ENCODE measurements at regions of chr18 and their contacts with region 1.

Region 1: GRCh38 chr18:62584241-62585120 is 61.7 kb downstream of the ZCCHC2 start:
- DNase-seq: peak; percentile 88
- ATAC-seq: peak; percentile 94
- H3K4me3 ChIP-seq: no peak overlapping the region
- H3K4me3 Mint-ChIP-seq: peak overlapping the region; percentile 35
- H3K27ac ChIP-seq: no peak overlapping the region
- H3K27ac Mint-ChIP-seq: peak overlapping the region; percentile 11
- H3K4me1 ChIP-seq: peaks cover 13 to 20% of the 10 kb centered on the region in 2 donors
- H3K4me1 Mint-ChIP-seq: peaks cover 16% of the 10 kb centered on the region
- H3K27me3 ChIP-seq: no peaks in the 10 kb centered on the region
- H3K27me3 Mint-ChIP-seq: no peaks in the 10 kb centered on the region
- CTCF ChIP-seq: peak; percentile 94

Region 2: GRCh38 chr18:62425465-62426195 is 158.9 kb before region 1 on chr18:
- CTCF ChIA-PET with region 1: interaction called, 73 read pairs
- POLR2A ChIA-PET with region 1: no interaction called
- intact Hi-C with region 1: loop called (anchors 1 kb)
- DNase-seq: peak; percentile 78
- ATAC-seq: peak; percentile 69
- H3K4me3 ChIP-seq: no peak overlapping the region
- H3K4me3 Mint-ChIP-seq: peak overlapping the region; percentile 29
- H3K27ac ChIP-seq: no peak overlapping the region
- H3K27ac Mint-ChIP-seq: no peak overlapping the region
- H3K4me1 ChIP-seq: peaks cover 5 to 8% of the 10 kb centered on the region in 2 donors
- H3K4me1 Mint-ChIP-seq: peaks cover 7% of the 10 kb centered on the region
- H3K27me3 ChIP-seq: peaks cover 0 to 3% (median 0%) of the 10 kb centered on the region in 4 experiments
- H3K27me3 Mint-ChIP-seq: peaks cover 9% of the 10 kb centered on the region
- CTCF ChIP-seq: peak; percentile 88

Region 3: GRCh38 chr18:62569081-62569655 is 15.3 kb before region 1 on chr18:
- CTCF ChIA-PET with region 1: interaction called, 13 read pairs
- POLR2A ChIA-PET with region 1: no interaction called
- intact Hi-C with region 1: loop called (anchors 2 kb)
- DNase-seq: no peak
- ATAC-seq: no peak
- H3K4me3 ChIP-seq: no peak overlapping the region
- H3K4me3 Mint-ChIP-seq: no peak overlapping the region
- H3K27ac ChIP-seq: no peak overlapping the region
- H3K27ac Mint-ChIP-seq: no peak overlapping the region
- H3K4me1 ChIP-seq: no peaks in the 10 kb centered on the region
- H3K4me1 Mint-ChIP-seq: no peaks in the 10 kb centered on the region
- H3K27me3 ChIP-seq: no peaks in the 10 kb centered on the region
- H3K27me3 Mint-ChIP-seq: no peaks in the 10 kb centered on the region
- CTCF ChIP-seq: no peak

Region 4: DNA sequence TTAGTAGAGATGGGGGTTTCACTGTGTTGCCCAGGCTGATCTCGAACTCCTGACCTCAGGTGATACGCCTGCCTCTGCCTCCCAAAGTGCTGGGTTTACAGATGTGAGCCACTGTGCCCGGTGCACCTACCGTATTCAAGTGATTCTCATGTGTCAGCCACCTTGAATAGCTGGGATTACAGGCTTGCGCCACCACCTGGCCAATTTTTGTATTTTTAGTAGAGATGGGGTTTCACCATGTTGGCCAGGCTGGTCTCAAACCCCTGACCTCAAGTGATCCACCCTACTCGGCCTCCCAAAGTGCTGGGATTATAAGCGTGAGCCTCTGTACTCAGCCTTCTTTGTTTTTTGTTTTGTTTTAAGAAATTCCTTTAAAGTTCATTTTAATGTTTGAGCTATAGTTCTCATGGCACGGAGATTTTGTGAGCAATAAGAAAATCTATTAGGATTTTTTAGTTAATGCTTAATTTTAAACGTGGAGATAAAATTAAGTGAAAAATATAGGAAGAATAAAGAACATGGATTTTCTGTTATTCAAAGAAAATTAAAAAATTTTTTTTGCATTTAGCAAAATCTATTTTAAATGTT is 373.5 kb after region 1 on chr18:
- CTCF ChIA-PET with region 1: interaction called, 10 read pairs
- POLR2A ChIA-PET with region 1: no interaction called
- intact Hi-C with region 1: no loop called
- DNase-seq: peak; percentile 57
- ATAC-seq: peak; percentile 36
- H3K4me3 ChIP-seq: no peak overlapping the region
- H3K4me3 Mint-ChIP-seq: no peak overlapping the region
- H3K27ac ChIP-seq: no peak overlapping the region
- H3K27ac Mint-ChIP-seq: no peak overlapping the region
- H3K4me1 ChIP-seq: no peaks in the 10 kb centered on the region
- H3K4me1 Mint-ChIP-seq: no peaks in the 10 kb centered on the region
- H3K27me3 ChIP-seq: no peaks in the 10 kb centered on the region
- H3K27me3 Mint-ChIP-seq: no peaks in the 10 kb centered on the region
- CTCF ChIP-seq: peak; percentile 56

Region 5: GRCh38 chr18:62982600-62983251 is 398.2 kb after region 1 on chr18:
- CTCF ChIA-PET with region 1: interaction called, 35 read pairs
- POLR2A ChIA-PET with region 1: no interaction called
- intact Hi-C with region 1: no loop called
- DNase-seq: peak; percentile 71
- ATAC-seq: peak; percentile 56
- H3K4me3 ChIP-seq: peak overlapping the region in 3 of 5 experiments; percentile 13 to 16 (median 15)
- H3K4me3 Mint-ChIP-seq: no peak overlapping the region
- H3K27ac ChIP-seq: no peak overlapping the region
- H3K27ac Mint-ChIP-seq: no peak overlapping the region
- H3K4me1 ChIP-seq: peaks cover 3 to 5% of the 10 kb centered on the region in 2 donors
- H3K4me1 Mint-ChIP-seq: peaks cover 6% of the 10 kb centered on the region
- H3K27me3 ChIP-seq: no peaks in the 10 kb centered on the region
- H3K27me3 Mint-ChIP-seq: no peaks in the 10 kb centered on the region
- CTCF ChIP-seq: peak; percentile 80

Region 6: DNA sequence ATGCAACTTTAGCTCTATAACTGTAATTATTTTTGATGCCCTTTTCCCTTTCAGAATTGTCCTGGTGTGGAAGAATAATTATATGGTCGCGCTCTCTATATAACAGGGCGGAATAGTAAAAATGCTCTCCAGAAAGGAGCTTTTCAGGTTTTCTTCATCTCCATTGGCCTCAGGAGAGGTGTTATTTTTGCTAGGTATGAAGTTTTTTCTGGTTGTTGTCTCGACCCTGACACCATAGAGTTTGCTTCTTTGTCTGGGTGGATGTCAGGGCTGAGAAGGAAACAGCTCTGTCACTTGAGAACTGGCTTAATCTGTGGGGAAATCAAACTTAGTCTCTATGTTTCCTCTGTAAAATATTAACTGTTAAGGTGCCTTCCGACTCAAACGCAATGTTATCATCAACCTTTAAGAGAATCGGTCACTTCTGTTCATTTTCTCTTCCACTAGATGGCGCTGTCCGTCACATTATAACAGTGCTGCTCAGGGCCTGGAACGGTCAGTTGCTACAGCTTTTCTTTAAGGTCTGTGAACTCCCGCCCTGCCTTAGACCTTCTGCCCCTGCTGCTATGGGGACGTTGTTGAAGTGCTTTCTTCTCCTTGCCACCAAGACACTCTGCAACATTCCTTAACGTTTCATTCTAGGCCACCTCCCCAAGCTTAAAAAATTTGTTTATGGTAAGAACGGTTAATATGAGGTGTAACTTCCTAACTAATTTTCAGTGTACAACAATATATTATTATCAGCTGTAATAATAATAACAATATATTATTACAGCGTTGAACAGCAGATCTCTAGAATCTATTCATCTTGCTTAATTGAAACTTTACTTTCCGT is 933.9 kb after region 1 on chr18:
- CTCF ChIA-PET with region 1: no interaction called
- POLR2A ChIA-PET with region 1: no interaction called
- intact Hi-C with region 1: no loop called
- DNase-seq: peak; percentile 77
- ATAC-seq: peak; percentile 61
- H3K4me3 ChIP-seq: no peak overlapping the region
- H3K4me3 Mint-ChIP-seq: no peak overlapping the region
- H3K27ac ChIP-seq: no peak overlapping the region
- H3K27ac Mint-ChIP-seq: no peak overlapping the region
- H3K4me1 ChIP-seq: peaks cover 0 to 4% of the 10 kb centered on the region in 2 donors
- H3K4me1 Mint-ChIP-seq: no peaks in the 10 kb centered on the region
- H3K27me3 ChIP-seq: no peaks in the 10 kb centered on the region
- H3K27me3 Mint-ChIP-seq: peaks cover 26% of the 10 kb centered on the region
- CTCF ChIP-seq: peak; percentile 86